ENCODE measurements at regions of chr22 and their contacts with region 1.

Region 1: DNA sequence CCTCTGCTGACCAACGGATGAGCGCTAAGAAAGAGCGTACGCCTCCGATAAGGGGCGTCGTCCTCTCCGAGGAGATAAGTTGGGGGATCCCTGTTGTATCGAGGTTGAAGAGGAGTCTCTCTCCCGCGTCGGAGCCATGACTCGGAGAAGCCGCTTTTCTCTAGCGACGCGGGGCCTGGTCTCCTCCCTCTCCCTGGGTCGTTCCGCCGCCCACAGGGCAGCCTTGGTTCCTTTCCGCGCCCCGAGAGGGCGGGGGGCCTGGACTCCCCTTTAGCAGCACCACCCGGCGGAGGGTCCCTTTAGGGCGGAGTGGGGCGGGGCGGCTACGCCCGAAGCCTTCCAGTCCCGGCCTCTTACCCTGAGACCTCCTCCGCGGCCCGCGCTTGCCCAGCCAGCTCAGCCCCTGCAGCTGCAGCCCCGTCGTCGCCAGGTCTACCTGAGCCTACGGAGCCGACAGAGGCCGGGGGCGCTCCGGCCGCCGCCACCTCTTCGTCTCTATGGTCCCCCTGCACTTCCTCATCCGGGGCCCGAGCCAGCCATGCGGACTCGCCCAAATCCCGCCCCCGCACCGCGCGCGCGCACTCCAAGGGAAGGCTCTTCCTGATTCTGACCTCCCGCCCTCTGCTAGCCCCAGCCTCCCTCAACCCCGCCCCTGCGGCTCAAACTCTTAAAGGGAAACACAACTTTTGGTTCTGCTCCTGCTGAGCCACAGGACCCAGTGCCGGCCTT is at the start of gene PRR14L:
- DNase-seq: peak; percentile 96
- ATAC-seq: peak; percentile 82 to 84
- H3K4me3 ChIP-seq: peak within 1 kb of the TSS; percentile 88 to 100 (median 98)
- H3K27ac ChIP-seq: peak within 1 kb of the TSS; percentile 83 to 97 (median 88)
- H3K4me1 ChIP-seq: peaks cover 29 to 42% of the 10 kb centered on the region in 2 donors
- H3K27me3 ChIP-seq: no peaks in the 10 kb centered on the region
- CTCF ChIP-seq: peak in 2 of 5 experiments; percentile 9 to 22
- POLR2A ChIP-seq: peak; percentile 44 to 81
- total RNA-seq, gene PRR14L: 6.5 to 8.4 (median 7.1) TPM

Region 2: DNA sequence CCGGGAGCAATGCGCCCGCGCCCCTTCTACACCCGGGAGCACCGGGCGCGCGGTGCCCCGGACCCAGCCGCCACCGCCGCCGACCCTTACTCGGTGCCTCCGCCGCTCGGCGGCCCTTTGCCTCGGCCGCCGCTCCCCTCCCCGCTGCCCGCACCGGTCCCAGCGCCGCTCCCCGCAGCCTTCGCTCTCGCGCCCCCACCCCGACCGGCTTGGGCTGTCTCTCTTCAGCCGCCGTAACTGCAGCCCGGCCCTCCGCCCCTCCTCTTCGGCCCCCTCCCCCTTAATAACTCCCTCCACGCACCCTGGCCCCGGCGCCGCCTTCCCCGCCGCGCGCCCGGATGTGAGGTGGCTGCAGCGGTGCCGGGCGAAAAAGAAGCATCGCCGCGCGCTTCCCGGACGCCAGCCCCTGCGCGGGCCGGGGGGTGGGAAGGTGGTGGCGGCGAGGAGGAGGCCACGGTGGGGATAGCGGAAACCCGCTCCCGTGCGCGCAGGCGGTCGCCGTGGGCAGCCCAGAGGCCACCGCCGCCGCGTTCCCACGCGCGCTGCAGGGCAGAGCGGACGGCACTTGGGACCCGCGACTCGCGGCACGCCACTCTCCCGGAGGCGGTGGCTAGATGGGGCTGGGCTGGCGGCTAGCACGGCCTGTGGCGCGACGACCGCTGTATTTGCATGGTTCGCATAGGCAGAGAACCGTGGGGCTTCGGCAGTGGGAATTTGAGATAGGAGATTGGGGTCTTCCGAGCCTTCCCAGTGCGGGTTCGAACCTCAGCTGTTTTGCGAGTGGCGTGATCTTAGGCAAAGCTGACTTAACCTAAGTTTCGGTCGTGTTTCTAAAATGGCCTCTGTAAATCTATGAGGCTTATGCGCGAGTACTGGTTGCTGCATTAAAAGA is 259.9 kb before region 1 on chr22 and contains the start of gene EIF4ENIF1:
- in situ Hi-C with region 1: no loop called
- intact Hi-C with region 1: loop called (anchors 5 kb)
- DNase-seq: peak; percentile 81 to 84
- ATAC-seq: peak; percentile 84 to 91
- H3K4me3 ChIP-seq: peak within 1 kb of the TSS; percentile 61 to 83 (median 78)
- H3K27ac ChIP-seq: peak within 1 kb of the TSS; percentile 86 to 99 (median 94)
- H3K4me1 ChIP-seq: peaks cover 22 to 31% of the 10 kb centered on the region in 2 donors
- H3K27me3 ChIP-seq: no peaks in the 10 kb centered on the region
- CTCF ChIP-seq: peak in 2 of 5 experiments; percentile 16 to 25
- POLR2A ChIP-seq: peak; percentile 71 to 75
- total RNA-seq, gene EIF4ENIF1: 10.1 to 19.6 (median 15.1) TPM

Region 3: DNA sequence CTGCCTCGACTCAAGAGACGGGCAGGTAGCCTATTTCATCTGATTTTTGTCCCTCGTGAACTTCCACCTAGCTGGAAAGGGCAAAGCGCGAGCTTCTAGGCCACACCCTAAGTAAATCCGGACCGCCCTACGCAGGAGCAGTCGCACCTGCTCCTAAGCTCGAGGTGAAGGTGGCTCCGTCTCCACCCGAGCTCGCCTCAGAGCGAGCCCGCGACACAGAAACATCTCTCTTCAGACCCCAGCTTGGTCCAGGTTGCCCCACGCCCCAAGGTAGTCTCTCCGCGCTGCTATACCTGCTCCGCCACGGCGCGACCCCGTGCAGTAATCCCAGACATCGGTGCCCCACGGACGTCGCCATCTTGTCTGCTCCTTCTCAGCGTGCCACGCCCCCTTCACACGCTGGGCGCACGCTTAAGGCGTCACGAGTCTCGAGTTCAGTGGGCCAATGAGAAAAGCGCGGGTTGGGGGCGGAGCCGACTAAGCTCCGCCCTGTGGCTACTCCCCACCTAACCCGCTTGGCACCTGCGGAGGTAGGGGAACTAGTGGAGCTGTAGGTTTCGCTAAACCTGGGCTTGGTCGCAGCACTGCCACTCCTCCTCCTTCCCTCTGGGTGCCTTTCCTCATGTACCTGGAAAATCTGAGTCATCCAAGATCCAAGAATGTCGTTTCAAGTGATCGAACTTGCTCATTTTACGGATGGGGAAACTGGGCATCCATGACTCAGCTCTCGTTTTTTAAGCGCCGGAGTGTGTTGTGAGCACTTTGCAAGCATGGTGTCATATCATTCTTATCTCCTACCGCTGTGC is 87.7 kb before region 1 on chr22 and contains the start of gene PISD:
- in situ Hi-C with region 1: no loop called
- intact Hi-C with region 1: loop called (anchors 2 kb)
- DNase-seq: peak; percentile 87 to 94
- ATAC-seq: peak; percentile 98
- H3K4me3 ChIP-seq: peak within 1 kb of the TSS; percentile 88 to 96 (median 94)
- H3K27ac ChIP-seq: peak within 1 kb of the TSS; percentile 64 to 85 (median 78)
- H3K4me1 ChIP-seq: peaks cover 16 to 19% of the 10 kb centered on the region in 2 donors
- H3K27me3 ChIP-seq: no peaks in the 10 kb centered on the region
- CTCF ChIP-seq: no peak
- POLR2A ChIP-seq: peak; percentile 69 to 73
- total RNA-seq, gene PISD: 15.3 to 19.0 (median 18.5) TPM

Region 4: GRCh38 chr22:31943976-31944699 is 194.3 kb after region 1 on chr22 and contains the start of gene YWHAH:
- in situ Hi-C with region 1: no loop called
- intact Hi-C with region 1: loop called (anchors 5 kb)
- DNase-seq: peak; percentile 94 to 95
- ATAC-seq: peak; percentile 90 to 91
- H3K4me3 ChIP-seq: peak within 1 kb of the TSS; percentile 63 to 94 (median 80)
- H3K27ac ChIP-seq: peak within 1 kb of the TSS; percentile 86 to 97 (median 94)
- H3K4me1 ChIP-seq: peaks cover 9 to 19% of the 10 kb centered on the region in 2 donors
- H3K27me3 ChIP-seq: no peaks in the 10 kb centered on the region
- CTCF ChIP-seq: peak in 1 of 5 experiments; percentile 19
- POLR2A ChIP-seq: peak; percentile 95 to 96
- total RNA-seq, gene YWHAH: 26.6 to 65.8 (median 45.7) TPM

Region 5: GRCh38 chr22:32411829-32412592 is 662.2 kb after region 1 on chr22 and contains the start of gene RTCB:
- in situ Hi-C with region 1: no loop called
- intact Hi-C with region 1: loop called (anchors 5 kb)
- DNase-seq: peak; percentile 74 to 85
- ATAC-seq: peak; percentile 90 to 92
- H3K4me3 ChIP-seq: peak within 1 kb of the TSS; percentile 91 to 96 (median 92)
- H3K27ac ChIP-seq: peak within 1 kb of the TSS; percentile 77 to 85 (median 80)
- H3K4me1 ChIP-seq: peaks cover 11 to 27% of the 10 kb centered on the region in 2 donors
- H3K27me3 ChIP-seq: no peaks in the 10 kb centered on the region
- CTCF ChIP-seq: peak in 1 of 5 experiments; percentile 7
- POLR2A ChIP-seq: peak; percentile 64 to 76
- total RNA-seq, gene RTCB: 53.7 to 76.4 (median 56.6) TPM